ENCODE measurements at regions of chr3 and their contacts with region 1.

Region 1: DNA sequence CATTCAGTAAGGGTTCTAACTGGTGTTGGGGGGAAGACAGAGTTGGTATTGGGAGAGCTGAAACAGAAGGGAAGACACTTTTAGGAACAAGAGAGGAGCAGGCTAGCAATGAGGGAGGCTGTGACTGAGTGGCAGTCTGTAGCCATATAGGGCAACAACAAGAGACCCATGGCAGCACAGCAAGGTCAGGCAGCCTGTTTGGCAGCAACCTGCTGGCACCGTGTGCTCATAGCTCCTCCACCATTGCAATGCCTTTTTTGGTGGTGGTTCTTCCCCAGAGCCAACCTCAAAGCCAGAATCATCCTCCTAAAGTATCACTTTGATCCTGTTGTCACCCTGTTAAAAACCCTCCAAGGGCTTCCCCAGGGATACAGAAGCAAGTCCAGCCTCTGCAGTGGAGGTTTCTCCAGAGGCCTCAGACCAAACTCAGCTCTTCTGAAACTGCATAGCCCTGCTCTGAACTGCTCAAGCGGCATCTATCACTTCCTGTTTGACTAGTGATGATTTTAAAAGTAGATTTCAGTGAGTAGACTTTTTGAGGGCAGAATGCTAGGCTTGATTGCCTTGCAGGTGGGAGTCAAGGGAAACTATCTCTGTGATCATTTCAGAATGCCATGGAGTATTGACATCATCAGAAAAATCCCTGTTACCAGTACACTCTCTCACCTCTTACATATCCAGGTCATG is 176.9 kb downstream of the STAC start:
- DNase-seq: peak; percentile 76
- H3K4me3 ChIP-seq: no peak overlapping the region
- H3K27ac ChIP-seq: peak overlapping the region in 3 of 4 donors; percentile 49 to 66 (median 65)
- H3K4me1 ChIP-seq: peaks cover 0 to 36% (median 22%) of the 10 kb centered on the region in 4 donors
- H3K27me3 ChIP-seq: no peaks in the 10 kb centered on the region
- CTCF ChIP-seq: no peak
- EP300 ChIP-seq: no peak
- POLR2A ChIP-seq: no peak

Region 2: DNA sequence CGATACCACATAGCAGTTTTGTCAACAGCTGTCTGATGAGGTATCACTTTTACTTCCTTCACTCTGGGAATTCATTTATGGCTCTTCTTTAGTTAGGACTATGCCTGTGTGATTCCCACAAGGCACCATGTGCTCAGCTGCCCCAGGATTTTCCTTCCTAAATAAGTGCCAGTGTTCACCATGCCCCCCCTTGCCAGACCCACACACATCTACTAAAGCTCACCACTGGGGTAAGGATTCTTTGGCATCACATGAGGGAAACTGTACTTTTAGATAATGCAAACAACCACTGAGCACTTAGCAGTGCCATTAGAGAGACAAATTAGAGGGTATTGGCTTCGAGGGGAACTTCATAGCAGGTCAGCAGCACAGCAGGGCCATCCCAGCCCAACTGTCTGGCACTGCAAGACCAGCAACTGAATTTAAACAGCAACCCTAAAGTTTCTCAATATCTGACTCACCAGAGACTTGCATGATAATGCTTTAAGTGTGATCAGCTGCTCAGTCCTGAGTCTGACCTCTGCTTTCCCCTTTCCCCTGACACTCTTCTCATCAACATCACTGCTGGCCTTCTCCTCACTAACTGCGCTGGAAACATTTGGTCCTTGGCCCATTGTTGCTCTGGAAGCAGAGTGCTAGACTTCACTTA is 62.6 kb before region 1 on chr3:
- intact Hi-C with region 1: loop called (anchors 10 kb)
- DNase-seq: peak; percentile 73
- H3K4me3 ChIP-seq: no peak overlapping the region
- H3K27ac ChIP-seq: peak overlapping the region; percentile 44 to 61 (median 58)
- H3K4me1 ChIP-seq: peaks cover 0 to 41% (median 32%) of the 10 kb centered on the region in 4 donors
- H3K27me3 ChIP-seq: no peaks in the 10 kb centered on the region
- CTCF ChIP-seq: no peak
- EP300 ChIP-seq: peak in 2 of 4 donors; percentile 25 to 48
- POLR2A ChIP-seq: no peak

Region 3: DNA sequence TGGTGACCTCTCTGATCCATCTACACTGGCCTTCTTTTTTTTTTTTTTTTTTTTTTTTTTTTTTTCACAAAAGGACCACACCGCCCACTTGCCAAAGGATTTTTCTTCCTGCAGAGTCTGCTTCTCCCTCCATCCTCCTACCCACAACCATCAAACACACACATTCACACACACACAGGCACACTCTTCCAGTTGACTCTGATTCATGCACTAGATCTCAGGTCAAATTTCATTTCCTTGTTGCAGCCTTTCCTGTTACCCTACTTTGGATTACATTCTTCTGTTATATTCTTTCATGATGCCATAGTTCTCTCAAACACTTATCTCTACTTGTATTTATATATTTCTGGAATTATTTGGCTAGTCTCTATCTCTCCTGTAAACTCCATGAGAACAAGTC is 43.0 kb before region 1 on chr3:
- intact Hi-C with region 1: no loop called
- DNase-seq: no peak
- H3K4me3 ChIP-seq: no peak overlapping the region
- H3K27ac ChIP-seq: no peak overlapping the region
- H3K4me1 ChIP-seq: peaks cover 0 to 22% (median 18%) of the 10 kb centered on the region in 4 donors
- H3K27me3 ChIP-seq: no peaks in the 10 kb centered on the region
- CTCF ChIP-seq: no peak
- EP300 ChIP-seq: no peak
- POLR2A ChIP-seq: no peak

Region 4: DNA sequence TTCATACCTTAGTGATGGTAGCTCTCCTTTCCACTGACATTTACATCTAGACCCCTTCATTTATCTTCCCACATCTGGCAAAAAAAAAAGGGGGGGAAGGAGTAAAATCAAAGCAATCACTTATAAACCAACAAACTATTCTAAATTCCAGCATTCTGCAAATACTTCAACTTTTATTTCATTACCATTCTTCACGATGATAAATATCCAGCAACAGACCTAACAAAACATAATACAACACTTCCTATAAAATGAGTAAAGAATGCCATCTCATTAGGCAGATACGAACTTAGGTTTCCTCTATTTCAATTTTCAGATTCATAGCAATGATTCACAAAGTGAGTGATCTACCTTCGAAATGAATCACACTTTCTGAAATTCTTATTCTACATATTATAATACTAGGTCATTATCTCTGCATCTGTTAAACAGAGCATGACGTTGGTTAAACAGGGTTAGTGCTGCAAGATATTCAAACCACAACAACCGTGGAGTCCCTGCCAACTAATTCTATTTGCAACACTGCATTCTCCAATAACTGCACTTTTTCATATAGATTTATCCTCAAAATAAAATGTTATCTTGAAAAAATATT is 617.5 kb after region 1 on chr3 and contains the start of gene LRRFIP2:
- intact Hi-C with region 1: no loop called
- DNase-seq: no peak
- H3K4me3 ChIP-seq: peak within 1 kb of the TSS; percentile 86 to 97 (median 89)
- H3K27ac ChIP-seq: peak within 1 kb of the TSS; percentile 94 to 99 (median 97)
- H3K4me1 ChIP-seq: peaks cover 0 to 74% (median 50%) of the 10 kb centered on the region in 4 donors
- H3K27me3 ChIP-seq: no peaks in the 10 kb centered on the region
- CTCF ChIP-seq: no peak
- EP300 ChIP-seq: no peak
- POLR2A ChIP-seq: no peak
- total RNA-seq, gene LRRFIP2: 49.4 to 66.7 (median 55.9) TPM

Measured in sigmoid colon (tissue), 7 donors.